Activated B cell treated with CpG ODN at 0.5 μM for 24 hours (primary cell): ENCODE measurements at regions of chr1 and their contacts with region 1.

Region 1: GRCh38 chr1:107246775-107247345 is 106.0 kb downstream of the NTNG1 start:
- DNase-seq: no peak
- ATAC-seq: peak; percentile 78
- H3K4me3 Mint-ChIP-seq: peak overlapping the region; percentile 76
- H3K27ac Mint-ChIP-seq: peak overlapping the region; percentile 96
- H3K4me1 Mint-ChIP-seq: peaks cover 45% of the 10 kb centered on the region
- H3K27me3 Mint-ChIP-seq: no peaks in the 10 kb centered on the region
- CTCF ChIP-seq: no peak

Region 2: GRCh38 chr1:106937104-106937503 is 309.8 kb before region 1 on chr1:
- CTCF ChIA-PET with region 1: no interaction called
- POLR2A ChIA-PET with region 1: no interaction called
- intact Hi-C with region 1: no loop called
- DNase-seq: no peak
- ATAC-seq: no peak
- H3K4me3 Mint-ChIP-seq: no peak overlapping the region
- H3K27ac Mint-ChIP-seq: no peak overlapping the region
- H3K4me1 Mint-ChIP-seq: no peaks in the 10 kb centered on the region
- H3K27me3 Mint-ChIP-seq: peaks cover 3% of the 10 kb centered on the region
- CTCF ChIP-seq: no peak

Region 3: GRCh38 chr1:107056426-107057196 is 190.2 kb before region 1 on chr1 and contains the start of gene PRMT6:
- CTCF ChIA-PET with region 1: no interaction called
- POLR2A ChIA-PET with region 1: interaction called, 14 read pairs
- intact Hi-C with region 1: loop called (anchors 2 kb)
- DNase-seq: peak; percentile 75
- ATAC-seq: peak; percentile 94
- H3K4me3 Mint-ChIP-seq: peak within 1 kb of the TSS; percentile 94
- H3K27ac Mint-ChIP-seq: peak within 1 kb of the TSS; percentile 90
- H3K4me1 Mint-ChIP-seq: peaks cover 31% of the 10 kb centered on the region
- H3K27me3 Mint-ChIP-seq: no peaks in the 10 kb centered on the region
- CTCF ChIP-seq: no peak
- total RNA-seq, gene PRMT6: 19.8 and 22.3 TPM in 2 replicates

Region 4: GRCh38 chr1:107142140-107142542 is 104.7 kb before region 1 on chr1:
- CTCF ChIA-PET with region 1: no interaction called
- POLR2A ChIA-PET with region 1: no interaction called
- intact Hi-C with region 1: loop called (anchors 5 kb)
- DNase-seq: no peak
- ATAC-seq: no peak
- H3K4me3 Mint-ChIP-seq: peak overlapping the region; percentile 86
- H3K27ac Mint-ChIP-seq: peak overlapping the region; percentile 68
- H3K4me1 Mint-ChIP-seq: peaks cover 23% of the 10 kb centered on the region
- H3K27me3 Mint-ChIP-seq: peaks cover 15% of the 10 kb centered on the region
- CTCF ChIP-seq: peak; percentile 99

Region 5: DNA sequence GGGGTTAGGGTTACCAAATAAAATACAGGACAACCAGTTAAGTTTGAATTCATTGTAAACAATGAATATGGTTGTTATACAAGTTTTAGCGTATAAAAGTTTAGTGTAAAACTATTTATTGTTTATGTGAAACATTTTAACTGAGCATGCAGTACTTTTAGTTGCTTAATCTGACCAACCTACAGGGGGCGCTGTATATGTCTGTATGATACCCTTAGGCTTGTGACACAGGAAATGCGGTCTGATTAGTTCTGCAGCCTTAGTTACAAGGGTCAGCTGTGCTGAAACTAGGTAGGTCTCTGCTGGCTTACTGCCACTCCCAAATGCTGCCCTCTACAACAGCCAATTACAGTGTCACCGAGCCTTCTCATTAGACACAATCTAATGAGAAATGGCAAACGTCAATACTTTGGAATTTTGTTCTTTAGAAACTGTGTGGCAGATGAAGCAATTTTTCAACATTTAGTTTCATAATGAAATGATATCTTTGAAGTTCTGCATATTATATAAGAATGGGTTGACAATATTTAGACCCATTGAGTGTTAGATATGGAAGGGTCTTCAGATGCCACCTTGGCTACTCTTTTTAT is 49.8 kb before region 1 on chr1:
- CTCF ChIA-PET with region 1: interaction called, 3 read pairs
- POLR2A ChIA-PET with region 1: no interaction called
- intact Hi-C with region 1: loop called (anchors 1 kb)
- DNase-seq: no peak
- ATAC-seq: peak; percentile 74
- H3K4me3 Mint-ChIP-seq: no peak overlapping the region
- H3K27ac Mint-ChIP-seq: no peak overlapping the region
- H3K4me1 Mint-ChIP-seq: peaks cover 3% of the 10 kb centered on the region
- H3K27me3 Mint-ChIP-seq: no peaks in the 10 kb centered on the region
- CTCF ChIP-seq: no peak

Region 6: GRCh38 chr1:107294686-107295085 is 47.8 kb after region 1 on chr1:
- CTCF ChIA-PET with region 1: no interaction called
- POLR2A ChIA-PET with region 1: no interaction called
- intact Hi-C with region 1: no loop called
- DNase-seq: no peak
- ATAC-seq: no peak
- H3K4me3 Mint-ChIP-seq: no peak overlapping the region
- H3K27ac Mint-ChIP-seq: no peak overlapping the region
- H3K4me1 Mint-ChIP-seq: no peaks in the 10 kb centered on the region
- H3K27me3 Mint-ChIP-seq: no peaks in the 10 kb centered on the region
- CTCF ChIP-seq: no peak

Region 7: DNA sequence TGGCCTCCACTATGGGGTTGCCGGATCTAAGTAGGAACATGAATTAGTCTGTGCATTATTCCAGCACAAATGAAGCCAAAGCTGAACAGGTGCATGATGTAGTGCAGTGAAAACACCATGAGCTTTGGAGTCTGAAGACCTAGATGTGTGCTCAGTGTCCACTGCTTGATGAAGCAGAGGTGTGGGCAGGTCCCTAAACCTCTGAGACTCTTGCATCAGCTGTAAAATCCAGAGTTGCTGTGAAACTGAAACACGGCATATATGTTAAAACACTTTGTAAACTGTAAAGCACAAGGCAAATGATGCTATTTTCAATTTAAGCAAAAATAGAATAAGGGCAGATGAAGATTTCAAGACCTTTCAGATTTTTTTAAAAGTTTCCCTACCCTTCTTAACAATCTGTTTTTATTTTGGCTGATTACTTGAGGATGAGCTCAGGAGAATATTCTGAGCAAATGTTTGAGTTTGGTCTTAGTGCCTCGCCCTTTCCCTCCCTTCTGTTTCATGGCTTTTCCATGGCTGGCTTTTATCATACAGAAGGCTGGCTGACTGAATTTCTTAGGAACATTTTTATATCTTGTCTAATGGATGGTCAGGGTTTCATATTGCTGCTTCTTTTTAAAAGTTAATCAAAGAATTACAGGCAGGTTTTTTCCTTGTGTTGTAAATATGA is 115.7 kb after region 1 on chr1:
- CTCF ChIA-PET with region 1: interaction called, 3 read pairs
- POLR2A ChIA-PET with region 1: no interaction called
- intact Hi-C with region 1: loop called (anchors 5 kb)
- DNase-seq: no peak
- ATAC-seq: no peak
- H3K4me3 Mint-ChIP-seq: no peak overlapping the region
- H3K27ac Mint-ChIP-seq: peak overlapping the region; percentile 69
- H3K4me1 Mint-ChIP-seq: peaks cover 47% of the 10 kb centered on the region
- H3K27me3 Mint-ChIP-seq: no peaks in the 10 kb centered on the region
- CTCF ChIP-seq: no peak

Region 8: DNA sequence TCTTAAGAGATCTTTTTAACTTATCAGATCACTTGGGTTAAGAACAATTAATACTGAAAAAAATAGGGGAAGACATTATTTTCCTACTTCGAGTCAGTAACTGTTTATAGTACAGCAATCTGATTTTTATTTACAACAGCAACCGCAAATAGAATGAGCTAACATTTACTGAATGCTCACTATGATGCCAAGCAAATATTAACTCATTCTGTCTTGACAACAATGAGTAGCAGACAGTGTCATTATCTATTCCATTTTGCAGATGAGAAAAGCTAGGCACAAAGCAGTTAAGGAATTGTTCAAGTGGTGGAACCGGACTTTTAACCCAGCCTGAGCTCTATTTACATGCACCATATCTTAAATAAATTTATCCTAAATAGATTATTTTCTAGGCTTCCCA is 167.7 kb after region 1 on chr1:
- CTCF ChIA-PET with region 1: no interaction called
- POLR2A ChIA-PET with region 1: no interaction called
- intact Hi-C with region 1: no loop called
- DNase-seq: no peak
- ATAC-seq: no peak
- H3K4me3 Mint-ChIP-seq: no peak overlapping the region
- H3K27ac Mint-ChIP-seq: no peak overlapping the region
- H3K4me1 Mint-ChIP-seq: no peaks in the 10 kb centered on the region
- H3K27me3 Mint-ChIP-seq: peaks cover 3% of the 10 kb centered on the region
- CTCF ChIP-seq: no peak

Region 9: GRCh38 chr1:107450899-107451664 is 204.2 kb after region 1 on chr1:
- CTCF ChIA-PET with region 1: no interaction called
- POLR2A ChIA-PET with region 1: no interaction called
- intact Hi-C with region 1: loop called (anchors 2 kb)
- DNase-seq: no peak
- ATAC-seq: peak; percentile 74
- H3K4me3 Mint-ChIP-seq: peak overlapping the region; percentile 75
- H3K27ac Mint-ChIP-seq: peak overlapping the region; percentile 97
- H3K4me1 Mint-ChIP-seq: peaks cover 87% of the 10 kb centered on the region
- H3K27me3 Mint-ChIP-seq: no peaks in the 10 kb centered on the region
- CTCF ChIP-seq: no peak